Pancreas (tissue), 10 donors: ENCODE measurements at regions of chrX and their contacts with region 1.

Region 1: GRCh38 chrX:34299451-34299967 is 167.4 kb upstream of the FAM47A start:
- DNase-seq: no peak
- ATAC-seq: no peak
- H3K4me3 ChIP-seq: no peak overlapping the region
- H3K27ac ChIP-seq: no peak overlapping the region
- H3K4me1 ChIP-seq: no peaks in the 10 kb centered on the region
- H3K27me3 ChIP-seq: peaks cover 0 to 16% (median 0%) of the 10 kb centered on the region in 4 donors
- CTCF ChIP-seq: no peak

Region 2: GRCh38 chrX:33434256-33435092 is 865.0 kb before region 1 on chrX:
- intact Hi-C with region 1: loop called in 1 of 3 experiments (anchors 10 kb)
- DNase-seq: peak in 4 of 6 donors; percentile 28 to 70 (median 54)
- ATAC-seq: peak in 3 of 4 donors; percentile 72 to 85 (median 76)
- H3K4me3 ChIP-seq: no peak overlapping the region
- H3K27ac ChIP-seq: no peak overlapping the region
- H3K4me1 ChIP-seq: no peaks in the 10 kb centered on the region
- H3K27me3 ChIP-seq: peaks cover 0 to 21% (median 5%) of the 10 kb centered on the region in 4 donors
- CTCF ChIP-seq: peak; percentile 86 to 92 (median 88)